ENCODE measurements at regions of chr9 and their contacts with region 1.

Region 1: GRCh38 chr9:113275157-113276131 is at the starts of genes CDC26 and PRPF4:
- DNase-seq: peak; percentile 93 to 96 (median 94)
- H3K4me3 ChIP-seq: peak within 1 kb of the TSS; percentile 84 to 87 (median 86)
- H3K4me3 Mint-ChIP-seq: no peak within 1 kb of the TSS
- H3K27ac ChIP-seq: peak within 1 kb of the TSS; percentile 91 to 98
- H3K27ac Mint-ChIP-seq: no peak within 1 kb of the TSS
- H3K4me1 ChIP-seq: peaks cover 13 to 20% of the 10 kb centered on the region in 2 donors
- H3K4me1 Mint-ChIP-seq: peaks cover 7% of the 10 kb centered on the region
- H3K27me3 ChIP-seq: no peaks in the 10 kb centered on the region
- H3K27me3 Mint-ChIP-seq: no peaks in the 10 kb centered on the region
- CTCF ChIP-seq: no peak
- polyA plus RNA-seq, gene CDC26: 17.9 to 87.8 (median 77.8) TPM
- polyA plus RNA-seq, gene PRPF4: 13.0 to 23.8 (median 22.1) TPM

Region 2: GRCh38 chr9:113221003-113221799 is 54.2 kb before region 1 on chr9 and contains the starts of genes FKBP15 and SLC31A1:
- intact Hi-C with region 1: loop called in 1 of 2 experiments (anchors 2 kb)
- DNase-seq: peak; percentile 98 to 99 (median 98)
- H3K4me3 ChIP-seq: peak within 1 kb of the TSS; percentile 86 to 98 (median 95)
- H3K4me3 Mint-ChIP-seq: peak within 1 kb of the TSS; percentile 93 to 94
- H3K27ac ChIP-seq: peak within 1 kb of the TSS; percentile 87 to 94
- H3K27ac Mint-ChIP-seq: peak within 1 kb of the TSS; percentile 91 to 99 (median 94)
- H3K4me1 ChIP-seq: peaks cover 52 to 64% of the 10 kb centered on the region in 2 donors
- H3K4me1 Mint-ChIP-seq: peaks cover 61% of the 10 kb centered on the region
- H3K27me3 ChIP-seq: no peaks in the 10 kb centered on the region
- H3K27me3 Mint-ChIP-seq: no peaks in the 10 kb centered on the region
- CTCF ChIP-seq: no peak
- polyA plus RNA-seq, gene FKBP15: 32.3 to 120 (median 55.7) TPM
- polyA plus RNA-seq, gene SLC31A1: 20.4 to 49.0 (median 38.8) TPM

Region 3: GRCh38 chr9:113317777-113318176 is 42.3 kb after region 1 on chr9:
- intact Hi-C with region 1: no loop called
- DNase-seq: no peak
- H3K4me3 ChIP-seq: no peak overlapping the region
- H3K4me3 Mint-ChIP-seq: no peak overlapping the region
- H3K27ac ChIP-seq: no peak overlapping the region
- H3K27ac Mint-ChIP-seq: peak overlapping the region in 1 of 7 donors; percentile 17
- H3K4me1 ChIP-seq: no peaks in the 10 kb centered on the region
- H3K4me1 Mint-ChIP-seq: no peaks in the 10 kb centered on the region
- H3K27me3 ChIP-seq: no peaks in the 10 kb centered on the region
- H3K27me3 Mint-ChIP-seq: no peaks in the 10 kb centered on the region
- CTCF ChIP-seq: no peak

Region 4: DNA sequence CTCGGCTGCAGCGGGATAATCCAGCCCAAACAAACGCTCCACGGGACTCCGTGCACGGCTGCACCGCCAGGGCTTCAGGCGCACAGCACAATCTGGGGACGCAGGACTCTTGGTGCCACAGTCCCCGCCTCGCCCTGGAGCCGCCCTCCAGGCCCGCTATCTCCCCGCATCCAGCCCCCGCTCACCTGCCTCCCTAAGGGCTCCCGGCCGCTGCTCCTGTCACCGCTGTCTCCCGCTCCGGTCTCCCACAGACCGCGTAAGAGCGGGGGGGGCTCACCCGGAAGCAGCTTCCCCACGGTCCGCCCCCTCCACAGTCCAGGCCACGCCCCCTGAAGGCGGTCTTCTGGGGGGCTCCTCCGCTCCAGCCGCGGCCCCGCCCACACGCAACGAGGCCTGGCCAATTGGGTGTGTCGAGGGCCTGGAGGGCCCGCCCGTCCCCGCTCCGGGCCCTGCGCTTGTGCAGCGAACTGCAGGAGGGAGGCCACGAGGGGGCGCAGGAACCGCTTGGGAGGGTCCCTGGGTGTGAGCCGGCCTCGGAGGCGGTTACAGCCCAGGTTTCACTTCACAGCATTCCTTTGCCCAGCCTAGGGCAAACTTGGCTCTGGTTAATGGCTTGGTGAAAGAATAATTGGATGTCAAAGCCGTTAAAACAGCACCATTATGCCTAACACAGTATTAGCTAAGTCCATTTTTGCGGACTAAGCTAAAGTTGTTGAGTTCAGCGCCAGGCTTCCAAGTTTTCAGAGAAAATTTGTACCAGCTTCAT is 125.8 kb after region 1 on chr9 and contains the start of gene ALAD:
- intact Hi-C with region 1: loop called in 1 of 2 experiments (anchors 2 kb)
- DNase-seq: peak; percentile 97 to 99 (median 97)
- H3K4me3 ChIP-seq: peak within 1 kb of the TSS; percentile 79 to 96 (median 84)
- H3K4me3 Mint-ChIP-seq: peak within 1 kb of the TSS; percentile 87 to 93
- H3K27ac ChIP-seq: peak within 1 kb of the TSS; percentile 36 to 77
- H3K27ac Mint-ChIP-seq: peak within 1 kb of the TSS; percentile 79 to 93 (median 87)
- H3K4me1 ChIP-seq: peaks cover 53 to 63% of the 10 kb centered on the region in 2 donors
- H3K4me1 Mint-ChIP-seq: peaks cover 63% of the 10 kb centered on the region
- H3K27me3 ChIP-seq: no peaks in the 10 kb centered on the region
- H3K27me3 Mint-ChIP-seq: peaks cover 0 to under 1% (median 0%) of the 10 kb centered on the region in 3 donors
- CTCF ChIP-seq: peak; percentile 95
- polyA plus RNA-seq, gene ALAD: 17.1 to 24.6 (median 20.9) TPM

Region 5: GRCh38 chr9:113410207-113410864 is 134.9 kb after region 1 on chr9 and contains the starts of genes C9orf43 and POLE3:
- intact Hi-C with region 1: loop called (anchors 2 to 5 kb)
- DNase-seq: peak; percentile 92 to 93 (median 92)
- H3K4me3 ChIP-seq: peak within 1 kb of the TSS; percentile 77 to 93 (median 88)
- H3K4me3 Mint-ChIP-seq: peak within 1 kb of the TSS; percentile 97 to 98
- H3K27ac ChIP-seq: peak within 1 kb of the TSS; percentile 92 to 93
- H3K27ac Mint-ChIP-seq: peak within 1 kb of the TSS; percentile 99 to 100 (median 100)
- H3K4me1 ChIP-seq: peaks cover 21 to 22% of the 10 kb centered on the region in 2 donors
- H3K4me1 Mint-ChIP-seq: peaks cover 21% of the 10 kb centered on the region
- H3K27me3 ChIP-seq: no peaks in the 10 kb centered on the region
- H3K27me3 Mint-ChIP-seq: no peaks in the 10 kb centered on the region
- CTCF ChIP-seq: no peak
- polyA plus RNA-seq, gene C9orf43: 0.17 TPM in 1 of 3 donors, not detected in the others
- polyA plus RNA-seq, gene POLE3: 36.1 to 113 (median 92.1) TPM

Region 6: GRCh38 chr9:113581865-113582697 is 306.6 kb after region 1 on chr9:
- intact Hi-C with region 1: loop called in 1 of 2 experiments (anchors 5 kb)
- DNase-seq: peak; percentile 84 to 85 (median 85)
- H3K4me3 ChIP-seq: peak overlapping the region; percentile 43 to 81 (median 63)
- H3K4me3 Mint-ChIP-seq: peak overlapping the region; percentile 71 to 92
- H3K27ac ChIP-seq: peak overlapping the region; percentile 89 to 94
- H3K27ac Mint-ChIP-seq: peak overlapping the region; percentile 94 to 99 (median 97)
- H3K4me1 ChIP-seq: peaks cover 94 to 99% of the 10 kb centered on the region in 2 donors
- H3K4me1 Mint-ChIP-seq: peaks cover 93% of the 10 kb centered on the region
- H3K27me3 ChIP-seq: no peaks in the 10 kb centered on the region
- H3K27me3 Mint-ChIP-seq: peaks cover 0 to 2% (median 0%) of the 10 kb centered on the region in 3 donors
- CTCF ChIP-seq: peak; percentile 64

Region 7: GRCh38 chr9:113591001-113591898 is 315.8 kb after region 1 on chr9:
- intact Hi-C with region 1: loop called in 1 of 2 experiments (anchors 5 kb)
- DNase-seq: peak in 2 of 3 donors; percentile 48 to 49
- H3K4me3 ChIP-seq: no peak overlapping the region
- H3K4me3 Mint-ChIP-seq: no peak overlapping the region
- H3K27ac ChIP-seq: no peak overlapping the region
- H3K27ac Mint-ChIP-seq: peak overlapping the region in 3 of 7 donors; percentile 2 to 11 (median 2)
- H3K4me1 ChIP-seq: peaks cover 48 to 62% of the 10 kb centered on the region in 2 donors
- H3K4me1 Mint-ChIP-seq: peaks cover 59% of the 10 kb centered on the region
- H3K27me3 ChIP-seq: no peaks in the 10 kb centered on the region
- H3K27me3 Mint-ChIP-seq: no peaks in the 10 kb centered on the region
- CTCF ChIP-seq: peak; percentile 82

Region 8: DNA sequence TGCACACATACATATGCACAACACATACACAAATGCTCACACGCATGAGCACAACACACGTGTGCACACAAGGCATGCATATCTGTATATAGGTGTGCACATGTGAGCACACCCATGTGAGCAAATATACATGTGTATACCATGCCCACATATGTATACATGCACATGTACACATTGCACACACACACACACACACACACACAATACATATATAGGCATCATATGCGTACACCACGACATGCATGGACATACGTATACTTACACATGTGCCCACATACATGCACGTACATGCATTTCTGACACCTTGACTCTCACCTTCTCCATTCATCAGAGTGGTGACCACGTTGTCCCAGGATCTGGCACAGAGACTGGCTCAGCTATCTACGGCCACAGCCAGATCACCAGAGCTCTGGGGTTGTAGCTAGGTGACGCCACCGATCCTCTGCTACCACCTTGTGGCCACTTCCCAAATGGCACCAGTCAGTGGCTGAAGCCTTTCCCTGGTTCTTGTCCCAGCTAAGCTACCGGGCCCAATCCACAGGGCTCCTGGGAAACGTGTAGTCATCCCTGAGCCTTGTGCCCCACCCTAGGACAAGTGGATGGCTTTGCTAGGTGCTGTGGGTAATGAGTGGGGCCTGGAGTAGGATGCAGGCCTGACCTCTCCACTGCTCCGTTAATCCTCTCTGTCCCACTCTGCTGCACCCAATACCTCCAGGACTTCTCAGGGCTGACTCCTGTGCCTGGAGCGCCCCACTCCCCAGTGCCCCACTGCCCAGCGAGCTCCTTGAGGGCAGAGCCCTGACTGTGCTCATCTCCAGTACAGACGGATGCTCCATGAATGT is 382.5 kb after region 1 on chr9:
- intact Hi-C with region 1: loop called (anchors 5 kb)
- DNase-seq: peak; percentile 67 to 80 (median 73)
- H3K4me3 ChIP-seq: no peak overlapping the region
- H3K4me3 Mint-ChIP-seq: no peak overlapping the region
- H3K27ac ChIP-seq: no peak overlapping the region
- H3K27ac Mint-ChIP-seq: peak overlapping the region in 1 of 7 donors; percentile 25
- H3K4me1 ChIP-seq: peaks cover 5 to 11% of the 10 kb centered on the region in 2 donors
- H3K4me1 Mint-ChIP-seq: peaks cover 15% of the 10 kb centered on the region
- H3K27me3 ChIP-seq: no peaks in the 10 kb centered on the region
- H3K27me3 Mint-ChIP-seq: peaks cover 0 to 8% (median 7%) of the 10 kb centered on the region in 3 donors
- CTCF ChIP-seq: peak; percentile 94

Measured in CD14-positive monocyte (primary cell).